ENCODE measurements at regions of chr11 and their contacts with region 1.

Region 1: DNA sequence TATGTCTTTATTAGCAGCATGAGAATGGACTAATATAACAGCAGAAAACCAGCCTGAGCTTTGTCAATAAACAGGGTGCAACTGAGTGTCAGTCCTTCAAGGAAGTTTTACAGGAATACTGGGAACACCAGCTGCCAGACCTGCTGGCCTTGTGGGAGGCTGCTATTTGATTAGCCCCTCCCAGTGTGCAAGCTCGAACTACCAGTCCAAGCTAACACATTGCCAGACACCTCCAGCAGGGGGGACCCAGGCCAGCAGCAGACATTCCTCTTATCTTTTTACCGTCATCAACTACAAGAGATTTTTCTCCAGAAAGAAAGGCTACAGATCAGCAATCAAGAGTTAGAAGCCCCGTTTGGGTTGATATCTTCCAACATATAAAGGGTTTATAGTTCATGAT is 942.8 kb upstream of the TENM4 start:
- DNase-seq: no peak

Region 2: GRCh38 chr11:80122211-80122610 is 261.4 kb before region 1 on chr11:
- intact Hi-C with region 1: loop called in 1 of 2 experiments (anchors 5 kb)
- DNase-seq: no peak

Region 3: DNA sequence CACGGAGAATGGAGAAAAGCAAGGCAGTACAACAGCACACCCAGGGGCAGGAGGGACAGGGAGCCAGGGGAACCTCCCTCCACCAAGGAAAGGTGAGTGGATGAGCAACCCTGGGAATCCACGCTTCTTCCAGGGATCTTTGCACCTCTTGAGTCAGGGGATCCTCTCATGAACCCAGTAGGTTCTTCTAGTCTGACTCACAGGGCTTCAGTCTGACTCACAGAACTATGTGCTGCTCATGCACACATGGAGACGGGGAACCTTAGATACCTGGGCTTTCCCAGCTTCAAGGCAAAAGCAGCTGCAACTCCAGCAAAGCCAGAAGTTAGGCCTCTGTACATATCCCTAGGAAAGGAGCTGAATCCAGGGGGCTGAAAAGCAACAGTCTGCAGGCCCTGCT is 78.6 kb after region 1 on chr11:
- intact Hi-C with region 1: loop called in 1 of 2 experiments (anchors 5 kb)
- DNase-seq: no peak

Region 4: DNA sequence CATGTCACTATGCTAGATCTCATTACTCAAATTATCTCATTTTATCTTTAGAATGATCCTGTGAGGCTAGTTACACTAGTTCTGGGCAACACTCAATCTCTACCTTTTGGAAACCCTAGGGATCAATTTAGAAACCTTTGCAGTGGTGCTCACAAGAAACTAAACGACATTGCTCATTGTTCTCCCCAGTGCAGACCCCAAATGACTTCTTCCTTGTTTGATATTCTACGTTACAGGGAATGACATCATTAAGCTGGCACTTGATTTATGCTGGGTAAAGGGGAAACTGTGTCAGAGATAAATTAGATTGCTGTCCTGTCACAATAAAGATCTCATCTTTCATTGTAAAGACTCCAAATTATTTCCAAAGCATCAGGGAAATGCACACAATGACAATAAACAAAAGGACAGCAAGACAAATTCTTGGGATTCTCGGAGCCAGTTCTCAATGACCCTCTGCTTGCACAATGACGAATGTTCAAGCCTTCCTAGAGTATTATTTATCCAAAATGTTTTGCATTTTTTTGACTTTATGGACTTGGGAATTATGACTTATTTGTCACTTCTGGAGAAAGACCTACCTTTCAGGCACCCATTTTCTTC is 179.0 kb after region 1 on chr11:
- intact Hi-C with region 1: no loop called
- DNase-seq: no peak

Measured in posterior vena cava (tissue), 2 donors.